ENCODE measurements at regions of chr14 and their contacts with region 1.

Region 1: GRCh38 chr14:21049271-21049673 is 7.1 kb downstream of the RNASE7 start:
- DNase-seq: no peak
- ATAC-seq: no peak
- H3K4me3 ChIP-seq: no peak overlapping the region
- H3K27ac ChIP-seq: no peak overlapping the region
- H3K4me1 ChIP-seq: peaks cover 0 to 22% (median 3%) of the 10 kb centered on the region in 12 donors
- H3K27me3 ChIP-seq: no peaks in the 10 kb centered on the region
- CTCF ChIP-seq: no peak
- POLR2A ChIP-seq: no peak

Region 2: DNA sequence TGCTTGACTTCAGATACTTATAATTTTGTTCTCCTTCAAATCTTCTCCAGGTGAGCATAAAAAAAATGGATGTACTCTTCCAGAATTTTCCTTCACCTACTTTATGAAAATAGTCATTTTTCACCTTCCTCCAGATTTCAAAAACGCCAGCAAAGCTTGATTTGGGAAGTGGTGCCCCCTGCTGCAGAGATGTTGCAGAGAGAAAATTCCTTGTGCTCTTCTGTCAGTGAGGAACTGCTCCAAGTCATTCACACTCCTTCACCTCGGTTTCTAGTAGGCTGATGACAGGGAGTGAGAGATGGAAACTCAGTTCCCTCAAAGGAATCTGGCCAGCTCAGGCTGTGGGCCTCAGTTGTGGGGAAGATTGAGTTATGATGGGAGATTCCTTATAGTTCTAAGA is 182.3 kb before region 1 on chr14:
- intact Hi-C with region 1: loop called in 1 of 10 experiments (anchors 5 kb)
- DNase-seq: no peak
- ATAC-seq: no peak
- H3K4me3 ChIP-seq: no peak overlapping the region
- H3K27ac ChIP-seq: no peak overlapping the region
- H3K4me1 ChIP-seq: no peaks in the 10 kb centered on the region
- H3K27me3 ChIP-seq: no peaks in the 10 kb centered on the region
- CTCF ChIP-seq: peak in 10 of 12 donors; percentile 20 to 52 (median 28)
- POLR2A ChIP-seq: no peak